Activated CD8-positive, alpha-beta T cell treated with anti-CD3 and anti-CD28 coated beads for 36 hours (primary cell): ENCODE measurements at regions of chr22 and their contacts with region 1.

Region 1: GRCh38 chr22:22810018-22810427 is 77.6 kb upstream of the IGLL5 start:
- DNase-seq: peak; percentile 72
- ATAC-seq: peak; percentile 78
- H3K4me3 Mint-ChIP-seq: no peak overlapping the region
- H3K27ac Mint-ChIP-seq: no peak overlapping the region
- H3K4me1 Mint-ChIP-seq: peaks cover 25% of the 10 kb centered on the region
- H3K27me3 Mint-ChIP-seq: no peaks in the 10 kb centered on the region
- CTCF ChIP-seq: peak; percentile 72

Region 2: GRCh38 chr22:22827187-22827948 is 17.3 kb after region 1 on chr22:
- CTCF ChIA-PET with region 1: interaction called, 10 read pairs
- POLR2A ChIA-PET with region 1: no interaction called
- intact Hi-C with region 1: no loop called
- DNase-seq: no peak
- ATAC-seq: no peak
- H3K4me3 Mint-ChIP-seq: no peak overlapping the region
- H3K27ac Mint-ChIP-seq: no peak overlapping the region
- H3K4me1 Mint-ChIP-seq: peaks cover 30% of the 10 kb centered on the region
- H3K27me3 Mint-ChIP-seq: no peaks in the 10 kb centered on the region
- CTCF ChIP-seq: no peak

Region 3: DNA sequence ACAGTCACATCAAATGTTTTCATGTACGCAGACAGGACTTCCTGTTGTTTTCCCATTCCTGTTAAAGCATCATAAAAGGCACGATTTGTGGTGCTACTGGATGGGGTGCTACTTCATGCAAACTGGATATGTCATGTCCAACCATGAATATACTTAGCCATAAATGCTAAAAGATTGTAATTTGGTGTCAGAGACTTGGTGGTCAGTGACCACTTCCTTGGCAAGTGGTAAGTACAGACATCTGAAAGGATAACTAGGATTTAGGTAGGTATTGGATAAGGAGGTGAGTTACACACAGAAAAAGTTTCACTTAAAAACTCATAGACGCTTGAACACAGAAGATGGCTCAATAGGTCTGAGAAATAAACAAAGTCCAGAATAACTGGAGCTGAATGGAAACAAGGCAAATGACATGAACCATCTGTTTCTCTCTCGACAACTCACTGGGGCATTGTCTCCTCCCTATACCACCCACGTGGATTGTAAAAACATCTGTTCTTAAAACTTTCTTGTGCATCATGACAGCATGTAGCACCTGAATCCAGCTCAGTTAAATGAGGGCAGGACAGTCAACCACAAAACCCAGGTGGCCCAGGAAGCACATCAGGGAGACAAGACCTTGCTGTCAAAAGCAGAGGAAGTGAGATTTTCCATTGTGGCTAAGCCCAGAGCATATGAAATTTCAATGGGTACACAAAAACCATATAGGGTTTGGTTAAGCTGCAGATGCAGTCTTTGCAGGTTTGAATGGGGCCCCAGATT is 55.5 kb after region 1 on chr22:
- CTCF ChIA-PET with region 1: interaction called, 7 read pairs
- POLR2A ChIA-PET with region 1: no interaction called
- intact Hi-C with region 1: loop called (anchors 5 kb)
- DNase-seq: peak; percentile 77
- ATAC-seq: peak; percentile 82
- H3K4me3 Mint-ChIP-seq: no peak overlapping the region
- H3K27ac Mint-ChIP-seq: peak overlapping the region; percentile 35
- H3K4me1 Mint-ChIP-seq: peaks cover 41% of the 10 kb centered on the region
- H3K27me3 Mint-ChIP-seq: no peaks in the 10 kb centered on the region
- CTCF ChIP-seq: no peak